OCI-LY7 (cell line): ENCODE measurements at regions of chr17 and their contacts with region 1.

Region 1: GRCh38 chr17:74457146-74457819 is 9.2 kb upstream of the CD300A start:
- DNase-seq: peak; percentile 88
- H3K4me3 ChIP-seq: no peak overlapping the region
- H3K27ac ChIP-seq: no peak overlapping the region
- H3K4me1 ChIP-seq: peaks cover 47% of the 10 kb centered on the region
- CTCF ChIP-seq: peak; percentile 100

Region 2: GRCh38 chr17:74212913-74213791 is 244.1 kb before region 1 on chr17 and contains the start of gene TTYH2:
- CTCF ChIA-PET with region 1: no interaction called
- POLR2A ChIA-PET with region 1: no interaction called
- intact Hi-C with region 1: loop called (anchors 10 kb)
- DNase-seq: peak; percentile 83
- H3K4me3 ChIP-seq: peak within 1 kb of the TSS; percentile 68
- H3K27ac ChIP-seq: peak within 1 kb of the TSS; percentile 53
- H3K4me1 ChIP-seq: peaks cover 56% of the 10 kb centered on the region
- CTCF ChIP-seq: peak; percentile 47; the same call in 1 of the 2 replicates
- total RNA-seq, gene TTYH2: 1.7 and 3.1 TPM in 2 replicates

Region 3: DNA sequence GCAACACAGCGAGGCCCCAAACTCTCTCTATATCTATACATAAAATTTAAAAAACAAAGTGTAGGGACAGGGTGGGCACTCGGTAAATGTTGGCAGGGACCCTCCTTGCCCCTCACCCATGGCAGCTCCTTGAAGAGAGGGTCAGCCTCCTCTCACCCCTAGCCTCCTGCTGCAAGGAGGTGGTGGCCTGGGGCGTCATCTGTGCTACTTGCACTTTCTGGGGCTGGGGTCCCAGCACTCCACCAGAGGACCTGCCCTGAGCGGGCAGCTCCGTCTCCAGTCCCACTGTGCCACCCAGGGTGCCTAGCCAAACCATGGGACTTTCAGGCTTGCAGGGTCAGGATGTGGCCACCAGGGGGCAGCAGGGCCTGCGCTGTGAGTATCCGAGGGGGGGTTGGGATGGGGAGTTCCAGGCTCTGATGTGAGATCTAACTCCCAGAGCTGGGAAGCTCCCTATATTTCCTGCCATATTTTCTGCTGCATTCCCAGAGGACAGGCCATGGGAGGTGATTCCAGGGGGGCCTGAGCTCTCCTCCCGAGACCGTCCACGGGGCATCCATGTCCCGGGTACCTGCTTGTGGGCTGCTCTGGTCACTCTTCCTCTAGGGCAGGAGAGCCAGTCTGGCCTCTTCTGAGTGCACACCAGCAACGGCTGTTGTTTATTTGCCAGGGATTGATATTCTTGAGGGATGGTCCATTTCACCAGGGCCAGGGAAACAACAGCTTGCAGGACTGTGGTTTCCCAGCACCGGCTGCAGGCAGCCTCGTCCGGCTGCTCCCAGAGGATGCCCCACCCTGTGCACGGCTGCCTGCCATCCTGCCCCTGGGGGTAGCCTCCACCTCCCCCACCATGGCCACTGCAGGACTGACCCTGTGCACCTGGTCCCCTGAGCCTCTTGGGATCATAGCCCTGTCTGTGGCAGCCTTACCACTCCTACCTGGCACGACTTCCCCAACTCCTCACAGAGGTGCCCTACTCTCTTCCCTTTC is 88.9 kb before region 1 on chr17:
- CTCF ChIA-PET with region 1: interaction called, 4 read pairs
- POLR2A ChIA-PET with region 1: interaction called, 4 read pairs
- intact Hi-C with region 1: loop called (anchors 1 kb)
- DNase-seq: peak; percentile 71
- H3K4me3 ChIP-seq: no peak overlapping the region
- H3K27ac ChIP-seq: no peak overlapping the region
- H3K4me1 ChIP-seq: peaks cover 6% of the 10 kb centered on the region
- CTCF ChIP-seq: peak; percentile 99

Region 4: GRCh38 chr17:74379495-74380085 is 77.7 kb before region 1 on chr17:
- CTCF ChIA-PET with region 1: interaction called, 8 read pairs
- POLR2A ChIA-PET with region 1: interaction called, 3 read pairs
- intact Hi-C with region 1: loop called (anchors 1 kb)
- DNase-seq: peak; percentile 88
- H3K4me3 ChIP-seq: no peak overlapping the region
- H3K27ac ChIP-seq: no peak overlapping the region
- H3K4me1 ChIP-seq: peaks cover 7% of the 10 kb centered on the region
- CTCF ChIP-seq: peak; percentile 99

Region 5: DNA sequence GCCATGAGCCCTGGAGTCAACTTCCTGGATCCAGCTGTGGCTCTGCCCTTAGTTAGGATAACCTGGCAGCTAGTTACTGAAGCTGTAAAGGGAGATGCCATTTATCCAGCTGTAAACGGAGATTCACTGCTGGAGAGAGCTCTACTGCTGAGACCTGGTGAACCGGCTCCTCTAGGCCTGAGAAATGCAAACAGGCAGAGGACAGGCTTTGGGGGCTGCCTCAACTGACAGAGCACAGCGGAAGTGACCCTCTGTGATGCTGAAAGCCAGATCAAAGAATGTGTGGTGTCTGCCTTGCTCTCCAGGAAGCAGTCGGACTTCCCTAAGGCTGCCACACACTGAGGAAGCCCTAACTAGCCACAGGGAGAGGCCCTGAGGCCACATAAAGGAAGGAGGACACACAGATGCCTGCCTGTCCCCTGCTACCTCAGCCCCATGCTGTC is 47.3 kb before region 1 on chr17:
- CTCF ChIA-PET with region 1: no interaction called
- POLR2A ChIA-PET with region 1: interaction called, 4 read pairs
- intact Hi-C with region 1: loop called (anchors 2 kb)
- DNase-seq: peak; percentile 76
- H3K4me3 ChIP-seq: no peak overlapping the region
- H3K27ac ChIP-seq: peak overlapping the region; percentile 24
- H3K4me1 ChIP-seq: peaks cover 30% of the 10 kb centered on the region
- CTCF ChIP-seq: no peak

Region 6: GRCh38 chr17:74437702-74438101 is 19.6 kb before region 1 on chr17:
- CTCF ChIA-PET with region 1: interaction called, 12 read pairs
- POLR2A ChIA-PET with region 1: interaction called, 5 read pairs
- intact Hi-C with region 1: loop called (anchors 1 kb)
- DNase-seq: peak; percentile 69
- H3K4me3 ChIP-seq: no peak overlapping the region
- H3K27ac ChIP-seq: no peak overlapping the region
- H3K4me1 ChIP-seq: peaks cover 6% of the 10 kb centered on the region
- CTCF ChIP-seq: peak; percentile 100

Region 7: DNA sequence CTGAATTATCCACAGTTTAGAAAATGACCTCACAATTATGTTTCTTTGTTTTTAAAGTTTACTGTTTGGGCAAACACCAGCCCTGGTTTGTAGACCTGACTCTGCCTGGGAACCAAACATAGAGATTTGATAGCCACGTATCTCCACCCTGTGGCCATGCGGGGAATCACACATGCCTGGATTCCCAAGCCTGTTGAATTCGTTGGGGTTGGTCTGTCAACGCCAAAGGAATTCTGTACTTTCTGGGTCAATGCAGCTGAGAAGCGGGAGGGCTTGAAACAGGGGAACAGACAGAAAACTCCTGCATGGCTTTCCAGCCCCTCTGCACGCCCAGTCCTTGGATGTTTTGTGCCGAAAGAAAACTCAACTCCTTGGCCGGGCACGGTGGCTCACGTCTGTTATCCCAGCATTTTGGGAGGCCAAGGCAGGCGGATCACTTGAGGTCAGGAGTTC is 36.1 kb after region 1 on chr17:
- CTCF ChIA-PET with region 1: no interaction called
- POLR2A ChIA-PET with region 1: interaction called, 3 read pairs
- intact Hi-C with region 1: loop called (anchors 1 kb)
- DNase-seq: peak; percentile 80
- H3K4me3 ChIP-seq: no peak overlapping the region
- H3K27ac ChIP-seq: no peak overlapping the region
- H3K4me1 ChIP-seq: no peaks in the 10 kb centered on the region
- CTCF ChIP-seq: peak; percentile 99

Region 8: DNA sequence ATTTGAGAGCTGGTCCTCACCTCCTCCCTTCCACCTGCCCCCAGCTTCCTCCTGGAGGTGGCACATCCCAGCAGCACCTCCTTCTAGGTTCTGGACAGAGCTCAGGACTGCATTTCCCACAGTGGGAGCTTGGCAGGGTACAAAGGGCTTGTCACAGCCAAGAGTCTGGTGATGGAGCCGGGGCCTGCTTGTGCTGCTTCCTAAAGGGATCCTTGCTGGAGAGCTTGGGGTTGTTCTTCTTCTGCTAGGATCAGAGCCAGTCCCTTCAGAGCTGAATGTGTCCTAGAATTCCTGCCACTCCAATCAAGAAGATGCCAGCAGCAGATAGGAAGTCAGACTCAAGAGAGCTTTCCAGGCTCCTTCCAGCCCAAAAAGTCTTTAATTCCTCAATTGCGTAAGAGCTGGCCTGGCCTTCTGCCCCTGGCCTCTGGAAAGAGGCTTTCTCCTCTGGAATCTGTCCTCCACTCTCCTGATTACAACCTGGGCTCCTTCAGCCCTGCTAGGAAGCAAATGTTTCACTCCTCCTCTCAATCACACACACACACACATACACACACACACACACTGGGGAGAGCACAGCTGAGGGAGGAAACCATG is 161.9 kb after region 1 on chr17:
- CTCF ChIA-PET with region 1: no interaction called
- POLR2A ChIA-PET with region 1: no interaction called
- intact Hi-C with region 1: no loop called
- DNase-seq: no peak
- H3K4me3 ChIP-seq: no peak overlapping the region
- H3K27ac ChIP-seq: no peak overlapping the region
- H3K4me1 ChIP-seq: no peaks in the 10 kb centered on the region
- CTCF ChIP-seq: no peak

Region 9: GRCh38 chr17:74690409-74690825 is 233.1 kb after region 1 on chr17:
- CTCF ChIA-PET with region 1: no interaction called
- POLR2A ChIA-PET with region 1: no interaction called
- intact Hi-C with region 1: no loop called
- DNase-seq: peak; percentile 13
- H3K4me3 ChIP-seq: no peak overlapping the region
- H3K27ac ChIP-seq: no peak overlapping the region
- H3K4me1 ChIP-seq: peaks cover 29% of the 10 kb centered on the region
- CTCF ChIP-seq: no peak